Astrocyte of the cerebellum (primary cell): ENCODE measurements at regions of chr3 and their contacts with region 1.

Region 1: GRCh38 chr3:123406598-123406997 is 42.3 kb downstream of the ADCY5 start:
- DNase-seq: no peak
- H3K4me3 ChIP-seq: no peak overlapping the region
- CTCF ChIP-seq: no peak

Region 2: GRCh38 chr3:123357275-123357674 is 49.3 kb before region 1 on chr3:
- in situ Hi-C with region 1: loop called (anchors 5 kb)
- DNase-seq: no peak
- H3K4me3 ChIP-seq: no peak overlapping the region
- CTCF ChIP-seq: no peak